Caco-2 (cell line): ENCODE measurements at regions of chr12 and their contacts with region 1.

Region 1: GRCh38 chr12:106357549-106358395 is at the start of gene POLR3B:
- DNase-seq: peak; percentile 94
- H3K4me3 ChIP-seq: peak within 1 kb of the TSS; percentile 64
- H3K4me3 Mint-ChIP-seq: no peak within 1 kb of the TSS
- H3K27ac Mint-ChIP-seq: peak within 1 kb of the TSS; percentile 94
- H3K4me1 ChIP-seq: peaks cover 29% of the 10 kb centered on the region
- H3K4me1 Mint-ChIP-seq: peaks cover 13% of the 10 kb centered on the region
- H3K27me3 ChIP-seq: no peaks in the 10 kb centered on the region
- H3K27me3 Mint-ChIP-seq: no peaks in the 10 kb centered on the region
- CTCF ChIP-seq: peak; percentile 82 to 91
- total RNA-seq, gene POLR3B: 13.7 and 13.9 TPM in 2 replicates

Region 2: GRCh38 chr12:106282457-106283097 is 75.2 kb before region 1 on chr12:
- CTCF ChIA-PET with region 1: interaction called, 8 read pairs
- POLR2A ChIA-PET with region 1: interaction called, 8 read pairs
- intact Hi-C with region 1: loop called (anchors 5 kb)
- DNase-seq: peak; percentile 70 to 73
- H3K4me3 ChIP-seq: no peak overlapping the region
- H3K4me3 Mint-ChIP-seq: no peak overlapping the region
- H3K27ac Mint-ChIP-seq: peak overlapping the region; percentile 35
- H3K4me1 ChIP-seq: peaks cover 34% of the 10 kb centered on the region
- H3K4me1 Mint-ChIP-seq: peaks cover 39% of the 10 kb centered on the region
- H3K27me3 ChIP-seq: no peaks in the 10 kb centered on the region
- H3K27me3 Mint-ChIP-seq: no peaks in the 10 kb centered on the region
- CTCF ChIP-seq: peak; percentile 68 to 88

Region 3: GRCh38 chr12:106302401-106303201 is 55.2 kb before region 1 on chr12 and contains the start of gene TCP11L2:
- CTCF ChIA-PET with region 1: interaction called, 4 read pairs
- POLR2A ChIA-PET with region 1: no interaction called
- intact Hi-C with region 1: loop called (anchors 2 kb)
- DNase-seq: peak; percentile 82 to 91
- H3K4me3 ChIP-seq: peak within 1 kb of the TSS; percentile 91
- H3K4me3 Mint-ChIP-seq: peak within 1 kb of the TSS; percentile 92
- H3K27ac Mint-ChIP-seq: peak within 1 kb of the TSS; percentile 100
- H3K4me1 ChIP-seq: peaks cover 25% of the 10 kb centered on the region
- H3K4me1 Mint-ChIP-seq: peaks cover 6% of the 10 kb centered on the region
- H3K27me3 ChIP-seq: no peaks in the 10 kb centered on the region
- H3K27me3 Mint-ChIP-seq: no peaks in the 10 kb centered on the region
- CTCF ChIP-seq: no peak
- total RNA-seq, gene TCP11L2: 7.7 and 11.8 TPM in 2 replicates

Region 4: GRCh38 chr12:106386813-106387535 is 29.2 kb after region 1 on chr12:
- CTCF ChIA-PET with region 1: interaction called, 6 read pairs
- POLR2A ChIA-PET with region 1: interaction called, 3 read pairs
- intact Hi-C with region 1: loop called (anchors 2 kb)
- DNase-seq: no peak
- H3K4me3 ChIP-seq: no peak overlapping the region
- H3K4me3 Mint-ChIP-seq: no peak overlapping the region
- H3K27ac Mint-ChIP-seq: no peak overlapping the region
- H3K4me1 ChIP-seq: no peaks in the 10 kb centered on the region
- H3K4me1 Mint-ChIP-seq: peaks cover 8% of the 10 kb centered on the region
- H3K27me3 ChIP-seq: no peaks in the 10 kb centered on the region
- H3K27me3 Mint-ChIP-seq: no peaks in the 10 kb centered on the region
- CTCF ChIP-seq: no peak

Region 5: DNA sequence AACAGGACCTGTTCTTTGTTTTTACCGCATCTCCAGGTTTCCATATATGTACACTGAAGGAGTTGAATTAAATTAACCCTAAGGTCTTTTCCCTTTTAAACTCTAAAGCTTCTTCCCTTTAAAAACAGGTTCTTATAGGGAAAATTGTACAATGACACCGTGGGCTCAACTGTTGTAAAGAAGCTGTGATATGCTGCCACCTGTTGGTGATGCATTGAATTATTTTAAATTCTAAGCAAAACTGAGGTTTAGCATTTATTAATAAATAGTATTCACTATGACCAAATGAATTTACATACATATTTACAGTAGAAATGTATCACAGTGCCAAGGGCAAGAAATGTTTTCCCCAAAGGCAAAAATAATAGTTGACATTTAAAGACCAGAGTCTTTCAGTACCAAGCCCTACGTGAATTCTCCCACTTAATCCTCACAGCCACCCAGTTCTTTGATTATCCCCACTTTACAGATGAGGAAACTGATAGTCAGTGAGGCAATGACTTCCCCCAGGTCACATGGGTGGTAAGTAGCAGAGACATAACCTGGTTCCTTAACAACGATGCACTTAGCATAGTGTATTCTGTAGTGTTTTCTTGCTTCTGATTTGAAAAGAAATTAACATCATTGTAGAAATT is 562.3 kb after region 1 on chr12:
- CTCF ChIA-PET with region 1: interaction called, 20 read pairs
- POLR2A ChIA-PET with region 1: interaction called, 6 read pairs
- intact Hi-C with region 1: loop called (anchors 1 kb)
- DNase-seq: peak in 1 of 2 experiments; percentile 45
- H3K4me3 ChIP-seq: no peak overlapping the region
- H3K4me3 Mint-ChIP-seq: no peak overlapping the region
- H3K27ac Mint-ChIP-seq: no peak overlapping the region
- H3K4me1 ChIP-seq: no peaks in the 10 kb centered on the region
- H3K4me1 Mint-ChIP-seq: no peaks in the 10 kb centered on the region
- H3K27me3 ChIP-seq: no peaks in the 10 kb centered on the region
- H3K27me3 Mint-ChIP-seq: peaks cover 3% of the 10 kb centered on the region
- CTCF ChIP-seq: peak; percentile 62 to 75